CD4-positive, alpha-beta T cell (primary cell): ENCODE measurements at regions of chr6 and their contacts with region 1.

Region 1: DNA sequence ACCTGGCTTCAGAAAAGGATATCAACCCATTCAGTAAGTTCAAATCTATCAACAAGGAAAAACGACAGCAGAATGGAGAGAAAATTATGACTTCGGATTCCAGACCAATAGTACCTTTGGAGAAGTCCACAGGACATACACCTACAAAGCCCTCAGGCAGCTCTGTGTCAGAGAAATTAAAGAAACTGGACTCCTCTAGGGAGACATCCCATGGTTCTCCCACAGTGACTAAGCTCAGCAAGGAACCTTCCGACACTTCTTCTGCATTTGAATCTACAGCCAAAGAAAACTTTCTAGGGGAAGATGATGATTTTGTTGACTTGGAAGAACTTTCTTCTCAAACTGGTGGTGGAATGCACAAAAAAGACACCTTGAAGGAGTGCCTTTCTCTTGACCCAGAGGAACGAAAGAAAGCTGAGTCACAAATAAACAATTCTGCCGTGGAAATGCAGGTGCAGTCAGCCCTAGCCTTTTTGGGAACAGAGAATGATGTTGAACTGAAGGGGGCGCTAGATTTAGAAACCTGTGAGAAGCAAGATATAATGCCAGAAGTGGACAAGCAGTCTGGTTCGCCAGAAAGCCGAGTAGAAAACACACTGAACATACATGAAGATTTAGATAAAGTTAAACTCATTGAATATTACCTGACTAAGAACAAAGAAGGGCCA is 67.4 kb upstream of the HINT3 start:
- DNase-seq: peak in 4 of 14 experiments; percentile 25 to 63 (median 56)
- ATAC-seq: peak; percentile 34
- H3K4me3 ChIP-seq: no peak overlapping the region
- H3K4me3 Mint-ChIP-seq: no peak overlapping the region
- H3K27ac ChIP-seq: no peak overlapping the region
- H3K27ac Mint-ChIP-seq: no peak overlapping the region
- H3K4me1 ChIP-seq: no peaks in the 10 kb centered on the region
- H3K4me1 Mint-ChIP-seq: no peaks in the 10 kb centered on the region
- H3K27me3 ChIP-seq: no peaks in the 10 kb centered on the region
- H3K27me3 Mint-ChIP-seq: no peaks in the 10 kb centered on the region
- CTCF ChIP-seq: peak; percentile 38

Region 2: GRCh38 chr6:125798734-125799508 is 90.2 kb before region 1 on chr6:
- CTCF ChIA-PET with region 1: no interaction called
- POLR2A ChIA-PET with region 1: no interaction called
- intact Hi-C with region 1: loop called in 1 of 2 experiments (anchors 5 kb)
- DNase-seq: no peak
- ATAC-seq: no peak
- H3K4me3 ChIP-seq: no peak overlapping the region
- H3K4me3 Mint-ChIP-seq: no peak overlapping the region
- H3K27ac ChIP-seq: no peak overlapping the region
- H3K27ac Mint-ChIP-seq: no peak overlapping the region
- H3K4me1 ChIP-seq: peaks cover 9% of the 10 kb centered on the region
- H3K4me1 Mint-ChIP-seq: peaks cover 62% of the 10 kb centered on the region
- H3K27me3 ChIP-seq: no peaks in the 10 kb centered on the region
- H3K27me3 Mint-ChIP-seq: no peaks in the 10 kb centered on the region
- CTCF ChIP-seq: no peak

Region 3: DNA sequence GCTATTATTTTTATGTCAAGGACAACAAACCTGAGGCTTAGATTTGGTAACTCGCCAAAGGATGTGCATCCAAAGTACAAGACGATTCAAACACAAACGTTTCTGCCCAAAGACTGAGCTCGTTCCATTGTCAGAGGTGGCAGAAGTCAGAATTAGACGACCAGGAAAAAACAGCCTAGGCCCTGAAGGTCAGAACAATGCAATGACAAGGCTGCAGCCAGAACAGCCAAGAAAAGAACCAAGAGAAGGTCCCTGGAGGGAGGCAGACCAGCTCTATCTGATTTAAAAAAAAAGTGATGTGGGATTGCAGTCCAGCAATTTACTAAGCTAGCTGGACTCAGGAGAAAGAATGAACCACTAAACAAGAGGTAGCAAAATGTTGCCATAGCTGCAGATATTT is 44.1 kb before region 1 on chr6:
- CTCF ChIA-PET with region 1: no interaction called
- POLR2A ChIA-PET with region 1: no interaction called
- intact Hi-C with region 1: loop called in 1 of 2 experiments (anchors 5 kb)
- DNase-seq: no peak
- ATAC-seq: no peak
- H3K4me3 ChIP-seq: no peak overlapping the region
- H3K4me3 Mint-ChIP-seq: no peak overlapping the region
- H3K27ac ChIP-seq: no peak overlapping the region
- H3K27ac Mint-ChIP-seq: no peak overlapping the region
- H3K4me1 ChIP-seq: no peaks in the 10 kb centered on the region
- H3K4me1 Mint-ChIP-seq: peaks cover 16% of the 10 kb centered on the region
- H3K27me3 ChIP-seq: no peaks in the 10 kb centered on the region
- H3K27me3 Mint-ChIP-seq: no peaks in the 10 kb centered on the region
- CTCF ChIP-seq: no peak